ENCODE measurements at regions of chr1 and their contacts with region 1.

Region 1: DNA sequence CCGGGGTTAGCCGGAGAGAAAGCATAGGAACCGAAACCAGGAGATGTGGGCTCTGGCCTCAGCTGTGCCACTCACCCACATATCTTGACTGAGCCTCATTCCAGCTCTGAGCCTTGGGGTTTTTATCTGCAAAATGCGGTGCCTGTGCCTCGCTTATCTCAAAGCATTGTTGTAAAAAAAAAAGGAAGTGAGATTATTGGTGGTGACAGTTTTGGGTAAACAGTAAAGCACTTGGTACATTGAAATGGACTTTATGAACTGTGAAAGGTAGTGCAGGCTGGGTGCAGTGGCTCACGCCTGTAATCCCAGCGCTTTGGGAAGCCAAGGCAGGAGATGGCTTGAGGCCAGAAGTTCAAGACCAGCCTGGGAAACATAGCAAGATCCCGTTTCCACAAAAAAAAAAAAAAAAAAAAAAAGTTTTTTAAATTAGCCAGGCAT is 3.8 kb downstream of the PTAFR start:
- DNase-seq: peak; percentile 51
- H3K4me3 Mint-ChIP-seq: peak overlapping the region; percentile 40
- H3K27ac Mint-ChIP-seq: peak overlapping the region; percentile 37
- H3K4me1 Mint-ChIP-seq: peaks cover 59% of the 10 kb centered on the region
- H3K27me3 Mint-ChIP-seq: peaks cover 45% of the 10 kb centered on the region

Region 2: GRCh38 chr1:27884006-27884954 is 288.5 kb before region 1 on chr1:
- intact Hi-C with region 1: no loop called
- DNase-seq: no peak
- H3K4me3 Mint-ChIP-seq: no peak overlapping the region
- H3K27ac Mint-ChIP-seq: peak overlapping the region; percentile 42
- H3K4me1 Mint-ChIP-seq: peaks cover 59% of the 10 kb centered on the region
- H3K27me3 Mint-ChIP-seq: no peaks in the 10 kb centered on the region

Region 3: DNA sequence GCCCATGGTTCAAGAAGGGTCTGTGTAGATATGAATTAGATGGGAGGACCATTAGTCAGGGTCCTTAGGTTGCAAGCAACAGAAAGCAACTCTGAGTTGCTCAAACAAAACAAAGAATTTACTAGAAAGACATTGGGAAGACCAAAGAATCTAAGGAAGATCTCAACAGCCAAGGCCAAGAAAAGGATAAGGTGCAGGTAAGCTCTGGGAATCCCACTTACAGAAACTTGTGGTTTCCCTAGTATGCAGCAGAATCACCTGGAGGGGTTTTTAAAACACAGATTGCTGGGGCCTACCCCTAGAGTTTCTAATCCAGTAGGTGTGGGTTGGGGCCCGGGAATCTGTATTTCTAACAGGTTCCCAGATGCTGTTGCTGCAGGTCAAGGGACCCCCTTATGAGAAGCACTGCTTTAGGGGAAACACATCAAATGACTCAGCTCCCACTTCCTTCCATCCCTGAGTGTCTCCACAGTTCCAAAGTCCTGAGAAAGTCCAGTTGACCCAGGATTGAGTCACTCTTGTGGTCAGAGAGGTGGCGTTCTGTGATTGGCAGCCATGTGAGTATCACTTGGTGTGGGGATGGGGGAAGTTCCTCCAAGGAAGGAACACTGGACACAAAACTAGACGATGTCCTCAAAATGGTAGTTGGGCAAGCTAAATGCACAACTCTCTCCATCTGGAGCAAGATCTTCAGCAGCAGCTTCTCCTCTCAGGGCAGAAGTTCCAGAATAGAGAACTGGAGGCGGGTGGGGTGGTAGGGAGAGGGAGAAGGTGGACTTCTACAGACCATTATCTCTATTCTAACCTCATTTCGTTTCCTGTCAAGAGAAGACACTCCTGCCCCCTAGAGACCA is 60.1 kb before region 1 on chr1:
- intact Hi-C with region 1: loop called (anchors 1 kb)
- DNase-seq: no peak
- H3K4me3 Mint-ChIP-seq: no peak overlapping the region
- H3K27ac Mint-ChIP-seq: no peak overlapping the region
- H3K4me1 Mint-ChIP-seq: peaks cover 37% of the 10 kb centered on the region
- H3K27me3 Mint-ChIP-seq: peaks cover 11% of the 10 kb centered on the region